ENCODE measurements at regions of chr20 and their contacts with region 1.

Region 1: DNA sequence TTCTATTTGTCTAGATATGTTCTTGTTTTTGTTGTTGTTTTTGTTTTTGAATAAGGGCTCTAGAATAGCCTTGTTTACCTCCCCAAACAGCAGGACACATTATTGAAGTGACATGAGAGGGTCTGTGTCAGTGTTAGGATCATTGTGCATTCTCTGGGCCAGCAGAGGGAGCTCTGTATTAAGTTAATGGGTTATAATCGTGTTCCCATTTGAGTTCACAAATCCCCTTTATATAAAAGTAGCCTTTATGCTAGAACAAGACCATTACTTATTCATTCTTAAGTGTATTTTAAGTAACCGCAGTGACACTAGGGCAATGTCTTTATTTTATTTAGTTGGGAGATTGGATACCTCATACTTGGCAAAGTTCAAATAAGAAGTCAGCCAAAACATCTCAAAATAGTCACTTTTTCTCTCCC is 44.8 kb downstream of the STK4 start:
- DNase-seq: peak; percentile 43 to 58
- H3K4me3 ChIP-seq: no peak overlapping the region
- H3K27ac ChIP-seq: no peak overlapping the region
- H3K4me1 ChIP-seq: peaks cover 46% of the 10 kb centered on the region
- H3K27me3 ChIP-seq: no peaks in the 10 kb centered on the region
- CTCF ChIP-seq: peak; percentile 94

Region 2: GRCh38 chr20:44832724-44833123 is 178.4 kb before region 1 on chr20:
- CTCF ChIA-PET with region 1: no interaction called
- POLR2A ChIA-PET with region 1: no interaction called
- intact Hi-C with region 1: no loop called
- DNase-seq: no peak
- H3K4me3 ChIP-seq: no peak overlapping the region
- H3K27ac ChIP-seq: no peak overlapping the region
- H3K4me1 ChIP-seq: no peaks in the 10 kb centered on the region
- H3K27me3 ChIP-seq: peaks cover 89% of the 10 kb centered on the region
- CTCF ChIP-seq: no peak

Region 3: DNA sequence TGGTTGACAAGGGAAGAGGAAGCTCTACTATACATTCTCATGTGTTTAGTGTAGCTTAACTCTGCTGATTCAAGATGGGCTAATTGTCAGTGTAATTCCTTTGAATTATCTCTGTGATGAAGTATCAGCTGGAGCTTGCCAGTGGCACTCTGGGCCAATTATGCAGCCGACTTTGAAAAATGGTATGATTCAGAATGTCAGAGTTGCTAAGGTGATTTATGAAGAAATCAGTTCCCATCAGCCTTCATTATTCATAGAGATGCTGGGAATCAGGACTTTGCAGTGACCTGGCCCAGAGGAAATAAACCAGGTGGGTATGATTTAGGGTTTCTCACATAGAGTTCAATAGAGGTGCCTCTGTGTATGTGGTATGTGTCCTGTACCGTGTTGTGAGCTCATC is 56.4 kb after region 1 on chr20:
- CTCF ChIA-PET with region 1: no interaction called
- POLR2A ChIA-PET with region 1: no interaction called
- intact Hi-C with region 1: loop called (anchors 2 kb)
- DNase-seq: peak; percentile 8 to 50
- H3K4me3 ChIP-seq: no peak overlapping the region
- H3K27ac ChIP-seq: peak overlapping the region; percentile 72
- H3K4me1 ChIP-seq: peaks cover 35% of the 10 kb centered on the region
- H3K27me3 ChIP-seq: no peaks in the 10 kb centered on the region
- CTCF ChIP-seq: no peak

Region 4: DNA sequence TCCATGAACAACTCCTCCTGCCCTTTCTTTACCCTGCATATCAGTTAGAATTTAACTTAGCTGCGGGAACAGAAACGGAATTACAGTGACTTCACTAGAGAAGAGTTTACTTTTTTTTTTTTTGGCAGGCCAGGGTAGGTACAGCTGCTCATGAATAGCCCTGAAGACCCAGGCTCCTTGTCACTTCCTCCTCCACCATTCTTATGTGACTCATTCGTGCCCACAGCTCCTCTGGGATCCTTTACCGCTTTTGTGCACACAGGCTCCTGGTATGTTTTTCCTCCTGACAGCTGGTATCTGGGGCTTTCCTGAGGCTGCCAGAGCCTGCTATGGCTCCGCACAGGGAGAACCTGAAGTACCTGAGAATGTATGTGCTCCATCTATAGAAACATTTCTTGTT is 93.7 kb after region 1 on chr20:
- CTCF ChIA-PET with region 1: no interaction called
- POLR2A ChIA-PET with region 1: interaction called, 22 read pairs
- intact Hi-C with region 1: no loop called
- DNase-seq: peak; percentile 70 to 71
- H3K4me3 ChIP-seq: no peak overlapping the region
- H3K27ac ChIP-seq: no peak overlapping the region
- H3K4me1 ChIP-seq: peaks cover 8% of the 10 kb centered on the region; the same call in 1 of the 2 replicates
- H3K27me3 ChIP-seq: no peaks in the 10 kb centered on the region
- CTCF ChIP-seq: no peak

Region 5: GRCh38 chr20:45269056-45269455 is 257.9 kb after region 1 on chr20:
- CTCF ChIA-PET with region 1: interaction called, 16 read pairs
- POLR2A ChIA-PET with region 1: no interaction called
- intact Hi-C with region 1: no loop called
- DNase-seq: no peak
- H3K4me3 ChIP-seq: no peak overlapping the region
- H3K27ac ChIP-seq: no peak overlapping the region
- H3K4me1 ChIP-seq: peaks cover 12% of the 10 kb centered on the region
- H3K27me3 ChIP-seq: no peaks in the 10 kb centered on the region
- CTCF ChIP-seq: no peak

Region 6: GRCh38 chr20:45347936-45348778 is 337.0 kb after region 1 on chr20 and contains the start of gene SDC4:
- CTCF ChIA-PET with region 1: no interaction called
- POLR2A ChIA-PET with region 1: interaction called, 14 read pairs
- intact Hi-C with region 1: no loop called
- DNase-seq: peak; percentile 63 to 80
- H3K4me3 ChIP-seq: peak within 1 kb of the TSS; percentile 76
- H3K27ac ChIP-seq: peak within 1 kb of the TSS; percentile 92
- H3K4me1 ChIP-seq: peaks cover 44% of the 10 kb centered on the region
- H3K27me3 ChIP-seq: no peaks in the 10 kb centered on the region
- CTCF ChIP-seq: 0 out of 2 replicates have a peak, but pooled peaks have one; percentile 21
- total RNA-seq, gene SDC4: 114 and 117 TPM in 2 replicates

Region 7: GRCh38 chr20:45771182-45771759 is 760.2 kb after region 1 on chr20:
- CTCF ChIA-PET with region 1: no interaction called
- POLR2A ChIA-PET with region 1: no interaction called
- intact Hi-C with region 1: loop called (anchors 1 kb)
- DNase-seq: peak; percentile 74 to 84
- H3K4me3 ChIP-seq: no peak overlapping the region
- H3K27ac ChIP-seq: no peak overlapping the region
- H3K4me1 ChIP-seq: peaks cover 6% of the 10 kb centered on the region
- H3K27me3 ChIP-seq: no peaks in the 10 kb centered on the region
- CTCF ChIP-seq: peak; percentile 98

Measured in PC-9 (cell line).